ENCODE measurements at regions of chr7 and their contacts with region 1.

Region 1: DNA sequence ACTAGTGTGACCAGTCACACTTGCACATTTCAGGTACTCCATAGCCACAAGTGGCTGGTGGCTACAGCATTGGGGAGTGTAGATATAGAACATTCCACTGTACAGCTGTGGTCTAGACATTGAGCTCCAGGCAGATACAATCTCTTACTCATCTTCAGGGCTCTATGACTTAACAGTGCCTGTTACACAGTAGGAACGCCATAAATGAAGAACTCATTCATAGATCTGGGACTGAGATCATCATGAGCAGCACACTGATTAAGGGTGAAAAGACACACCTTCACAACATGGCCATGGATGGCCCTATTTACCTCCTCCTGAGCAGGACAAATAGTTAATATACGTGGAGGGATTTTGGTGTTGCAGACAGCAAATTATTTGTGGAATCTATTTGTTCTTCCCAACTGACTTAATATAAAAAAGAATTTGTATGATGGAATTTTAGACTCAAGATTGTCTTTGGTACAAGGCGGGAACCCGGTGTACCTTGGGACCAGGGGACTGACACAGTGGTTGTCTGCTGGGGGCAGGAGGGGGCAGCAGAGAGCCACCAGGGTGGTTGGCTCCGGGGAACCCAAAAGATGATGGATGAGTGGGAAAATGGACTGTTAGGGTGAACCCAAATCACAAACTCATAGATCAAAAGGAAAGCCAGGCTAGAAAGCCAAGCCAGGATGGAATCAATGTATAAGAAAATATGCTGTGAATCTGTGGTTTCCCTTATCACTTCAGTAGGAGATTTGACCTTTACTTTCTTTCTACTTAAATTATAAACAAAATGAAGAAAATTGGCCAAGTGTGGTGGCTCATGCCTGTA is 24.3 kb upstream of the CPA2 start:
- DNase-seq: peak; percentile 59
- H3K4me3 ChIP-seq: no peak overlapping the region
- H3K27ac ChIP-seq: no peak overlapping the region
- H3K4me1 ChIP-seq: peaks cover 0 to 4% (median 0%) of the 10 kb centered on the region in 4 donors
- H3K27me3 ChIP-seq: no peaks in the 10 kb centered on the region
- CTCF ChIP-seq: peak; percentile 76 to 83 (median 78)
- EP300 ChIP-seq: no peak
- POLR2A ChIP-seq: no peak

Region 2: DNA sequence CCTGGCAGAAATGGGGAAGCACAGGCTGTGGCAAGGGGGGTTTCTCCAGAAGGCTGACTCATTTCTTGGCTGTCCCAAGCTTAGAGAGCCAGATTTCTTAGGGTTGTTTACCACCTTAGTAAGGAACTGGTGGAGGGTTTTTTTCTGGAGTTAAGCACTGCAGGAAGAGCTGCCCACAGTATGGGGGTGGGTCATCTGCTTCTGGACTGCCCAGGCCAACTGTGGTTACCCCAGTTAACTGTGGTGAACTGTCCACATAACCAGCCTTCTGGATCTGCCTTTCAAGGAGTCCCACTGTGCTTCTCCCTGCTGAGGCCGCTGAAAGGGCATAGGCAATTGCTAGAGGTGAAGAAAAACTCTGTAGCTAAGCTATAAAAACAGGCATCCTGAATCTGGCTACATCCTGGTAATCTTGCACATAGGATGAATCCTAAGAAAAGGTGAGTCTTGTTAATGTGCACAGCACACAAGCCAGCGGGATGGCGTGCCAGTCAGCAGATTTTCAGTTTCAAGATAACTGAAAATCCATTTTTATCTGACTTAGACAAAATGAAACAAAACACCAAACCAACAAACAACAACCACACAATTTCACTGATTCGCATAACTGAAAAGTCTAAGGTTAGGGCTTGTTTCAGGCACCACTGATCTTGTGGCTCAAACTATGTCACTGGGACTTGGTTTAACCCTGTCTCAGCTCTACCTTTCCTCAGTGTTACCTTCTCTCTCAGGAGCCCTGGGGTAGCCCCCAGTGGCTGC is 1119.5 kb before region 1 on chr7:
- in situ Hi-C with region 1: no loop called
- intact Hi-C with region 1: no loop called
- DNase-seq: no peak
- H3K4me3 ChIP-seq: no peak overlapping the region
- H3K27ac ChIP-seq: no peak overlapping the region
- H3K4me1 ChIP-seq: peaks cover 0 to 4% (median 0%) of the 10 kb centered on the region in 4 donors
- H3K27me3 ChIP-seq: peaks cover 8% of the 10 kb centered on the region
- CTCF ChIP-seq: no peak
- EP300 ChIP-seq: no peak
- POLR2A ChIP-seq: no peak

Region 3: DNA sequence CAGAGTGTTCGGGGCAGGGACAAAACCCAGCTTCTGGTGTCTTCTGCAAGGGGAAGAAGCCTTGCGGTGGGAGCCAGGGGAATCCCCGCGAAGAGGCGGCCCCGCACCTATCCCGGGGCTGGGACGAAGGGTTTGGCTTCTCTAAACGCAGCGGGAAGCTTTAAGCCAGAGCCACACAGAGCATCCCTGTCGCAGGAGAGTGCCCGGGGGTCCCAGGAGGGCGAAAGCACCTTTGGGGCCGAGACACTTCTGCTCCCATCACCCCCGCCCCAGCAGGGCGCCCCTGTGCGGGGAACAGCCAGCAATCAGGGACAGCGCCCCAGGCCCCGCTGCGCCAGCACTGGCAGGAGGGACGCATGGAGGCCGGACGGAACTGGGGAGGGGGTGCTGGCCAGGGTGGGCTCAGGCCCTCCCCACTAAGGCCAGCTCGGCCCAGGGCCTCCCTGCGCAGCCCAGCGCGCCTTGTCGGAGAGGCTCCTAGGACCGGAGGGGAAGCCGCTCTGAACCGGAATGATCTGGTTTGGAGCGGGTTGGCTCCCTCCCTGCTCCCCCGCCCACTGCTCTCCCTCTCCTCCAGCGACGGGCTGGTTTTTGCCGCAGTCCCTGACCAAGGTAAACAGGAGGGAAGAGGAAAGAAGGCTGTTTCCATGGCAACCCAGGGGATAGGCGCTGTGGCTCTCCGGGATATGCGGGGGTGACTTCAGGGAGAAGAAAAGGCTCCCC is 101.1 kb before region 1 on chr7:
- in situ Hi-C with region 1: no loop called
- intact Hi-C with region 1: no loop called
- DNase-seq: peak; percentile 81
- H3K4me3 ChIP-seq: peak overlapping the region; percentile 37 to 72 (median 58)
- H3K27ac ChIP-seq: peak overlapping the region; percentile 70 to 77 (median 72)
- H3K4me1 ChIP-seq: peaks cover 13 to 30% (median 24%) of the 10 kb centered on the region in 4 donors
- H3K27me3 ChIP-seq: no peaks in the 10 kb centered on the region
- CTCF ChIP-seq: no peak
- EP300 ChIP-seq: no peak
- POLR2A ChIP-seq: peak; percentile 40

Region 4: DNA sequence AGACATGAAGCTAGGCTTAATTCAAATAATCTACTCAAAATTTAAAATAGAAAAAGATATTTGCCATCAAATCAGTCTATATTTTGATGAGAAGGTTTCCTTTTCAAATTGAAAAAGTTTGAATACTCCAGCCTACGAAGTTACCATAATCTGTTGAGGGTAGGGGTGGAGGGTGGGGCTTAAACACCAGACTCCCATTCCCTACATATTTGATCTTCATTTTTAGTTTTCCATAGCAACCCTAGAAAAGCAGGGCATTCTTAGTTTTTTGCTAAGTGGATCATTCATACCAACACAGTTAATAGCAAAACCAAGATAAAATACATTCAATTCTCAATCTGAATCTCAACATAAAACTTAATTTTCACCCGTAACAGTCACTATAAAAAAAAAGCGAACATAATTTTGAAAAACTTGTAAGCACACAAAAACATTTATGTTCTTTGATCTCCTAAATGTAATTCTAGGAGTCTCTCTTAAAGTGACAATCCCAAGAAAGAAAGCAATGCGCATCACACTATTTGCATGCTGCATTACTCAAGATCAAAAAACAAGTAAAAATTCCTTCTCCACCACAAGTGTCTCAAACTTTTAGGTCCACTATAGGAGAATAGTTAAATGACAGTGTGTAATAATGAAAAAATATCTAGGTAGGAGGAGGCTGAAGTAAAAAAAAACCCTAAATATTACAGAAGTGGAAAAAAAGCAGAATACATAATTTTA is 68.0 kb before region 1 on chr7:
- in situ Hi-C with region 1: no loop called
- intact Hi-C with region 1: loop called (anchors 2 kb)
- DNase-seq: no peak
- H3K4me3 ChIP-seq: no peak overlapping the region
- H3K27ac ChIP-seq: no peak overlapping the region
- H3K4me1 ChIP-seq: no peaks in the 10 kb centered on the region
- H3K27me3 ChIP-seq: no peaks in the 10 kb centered on the region
- CTCF ChIP-seq: no peak
- EP300 ChIP-seq: no peak
- POLR2A ChIP-seq: no peak

Region 5: GRCh38 chr7:130721486-130722280 is 479.3 kb after region 1 on chr7:
- in situ Hi-C with region 1: loop called in 2 of 4 experiments (anchors 25 kb)
- intact Hi-C with region 1: no loop called
- DNase-seq: peak; percentile 55
- H3K4me3 ChIP-seq: no peak overlapping the region
- H3K27ac ChIP-seq: no peak overlapping the region
- H3K4me1 ChIP-seq: no peaks in the 10 kb centered on the region
- H3K27me3 ChIP-seq: peaks cover 24% of the 10 kb centered on the region
- CTCF ChIP-seq: peak; percentile 32 to 46 (median 37)
- EP300 ChIP-seq: no peak
- POLR2A ChIP-seq: no peak

Measured in transverse colon (tissue), 4 donors.